ENCODE measurements at regions of chr3 and their contacts with region 1.

Region 1: DNA sequence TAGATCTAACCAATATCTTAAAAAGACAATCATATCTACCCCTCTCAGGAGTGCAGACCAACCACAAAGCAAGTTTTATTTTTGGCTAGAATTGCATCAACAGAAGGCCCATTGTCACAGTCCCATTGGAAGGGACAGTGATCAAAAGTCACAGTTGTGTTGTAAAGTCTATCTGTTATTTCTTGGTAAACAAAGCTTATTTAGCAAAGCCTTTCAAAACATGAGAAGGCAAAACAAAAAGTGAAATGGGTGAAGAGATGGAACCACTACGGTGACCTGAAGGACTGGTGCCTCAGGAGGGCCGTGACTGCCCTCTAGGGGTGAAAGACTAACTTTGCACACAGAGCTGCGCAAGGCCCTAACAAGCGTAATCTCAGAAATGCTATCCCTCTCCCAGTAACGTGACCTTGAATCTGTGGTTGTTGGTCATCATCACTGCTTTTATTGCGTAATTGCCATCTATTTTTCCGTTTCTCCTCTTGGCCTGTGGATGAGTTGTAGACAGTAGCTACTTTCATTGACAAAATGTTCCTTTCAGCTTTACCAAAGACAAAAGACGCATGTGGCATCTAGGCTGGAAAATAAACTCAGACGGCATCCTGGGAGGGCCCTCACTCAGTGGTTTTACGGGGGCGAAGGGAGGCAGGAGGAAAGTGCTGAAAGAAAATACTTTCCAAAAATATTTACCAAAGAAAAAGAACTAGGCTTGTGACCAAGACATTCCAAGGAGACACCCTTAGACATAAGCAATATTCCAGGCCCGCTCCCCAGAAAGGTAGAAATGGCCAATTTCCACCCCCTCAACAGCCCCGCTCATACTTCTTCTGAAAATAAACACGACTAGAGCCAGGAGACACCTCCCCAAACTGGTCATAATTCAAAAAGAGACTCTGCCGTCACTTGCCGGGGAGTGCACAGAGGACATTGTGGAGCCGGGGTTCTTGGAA is 79.4 kb downstream of the FRMD4B start:
- DNase-seq: peak; percentile 66 to 75
- ATAC-seq: peak; percentile 98
- H3K4me3 ChIP-seq: no peak overlapping the region
- H3K27ac ChIP-seq: peak overlapping the region; percentile 49 to 65 (median 55)
- H3K4me1 ChIP-seq: peaks cover 0 to 3% of the 10 kb centered on the region in 2 donors
- H3K27me3 ChIP-seq: no peaks in the 10 kb centered on the region
- CTCF ChIP-seq: peak; percentile 84 to 94 (median 89)
- POLR2A ChIP-seq: no peak

Region 2: DNA sequence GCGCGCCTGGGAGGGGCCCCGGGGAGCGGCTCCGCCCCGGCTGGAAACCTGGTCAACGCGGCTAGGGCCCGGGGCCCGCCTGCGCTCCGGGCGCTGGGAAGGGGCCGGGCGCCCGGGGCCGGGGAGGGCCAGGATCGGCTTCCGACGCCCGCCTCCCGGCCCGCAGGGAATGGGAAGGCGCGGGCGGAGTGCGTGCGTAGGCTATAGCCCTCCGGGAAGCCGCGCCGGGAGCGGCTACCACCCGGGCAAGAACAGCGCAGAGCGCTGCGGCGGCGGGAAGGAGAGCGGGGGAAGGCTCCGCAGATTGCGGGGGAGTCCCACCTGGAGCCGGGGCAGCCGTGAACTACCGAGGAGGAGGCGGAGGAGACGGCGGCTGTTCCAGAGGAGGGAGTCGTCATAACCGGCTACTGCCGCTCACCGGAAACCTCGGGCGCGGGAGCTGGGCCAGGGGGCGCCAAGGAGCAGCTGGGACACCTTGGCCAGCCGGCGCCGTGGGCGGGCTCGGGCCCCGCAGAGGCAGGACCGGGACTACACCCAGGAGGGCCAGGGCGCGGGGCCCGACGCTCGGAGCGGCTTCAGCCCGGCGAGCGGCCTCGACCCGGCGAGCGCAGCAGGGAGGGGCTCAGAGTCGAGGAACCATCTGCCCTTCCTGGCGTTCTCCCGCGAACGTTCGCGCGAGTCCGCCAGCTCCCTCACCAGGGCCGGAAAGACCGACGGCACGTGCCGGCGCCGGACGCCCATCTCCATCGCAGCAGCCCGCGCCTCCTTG is 293.1 kb before region 1 on chr3 and contains the start of gene EOGT:
- in situ Hi-C with region 1: loop called in 3 of 4 experiments (anchors 10 to 25 kb)
- intact Hi-C with region 1: loop called (anchors 2 kb)
- DNase-seq: peak; percentile 78 to 91
- ATAC-seq: peak; percentile 89 to 91
- H3K4me3 ChIP-seq: peak within 1 kb of the TSS; percentile 73 to 88 (median 80)
- H3K27ac ChIP-seq: peak within 1 kb of the TSS; percentile 90 to 100 (median 98)
- H3K4me1 ChIP-seq: peaks cover 40% of the 10 kb centered on the region in 2 donors
- H3K27me3 ChIP-seq: no peaks in the 10 kb centered on the region
- CTCF ChIP-seq: peak; percentile 48 to 63 (median 62)
- POLR2A ChIP-seq: peak; percentile 46 to 74
- total RNA-seq, gene EOGT: 13.3 to 25.2 (median 20.1) TPM

Region 3: GRCh38 chr3:69051756-69052471 is 254.6 kb before region 1 on chr3 and contains the start of gene TMF1:
- in situ Hi-C with region 1: loop called in 1 of 4 experiments (anchors 25 kb)
- intact Hi-C with region 1: loop called (anchors 1 kb)
- DNase-seq: peak; percentile 97
- ATAC-seq: peak; percentile 99
- H3K4me3 ChIP-seq: peak within 1 kb of the TSS; percentile 81 to 97 (median 85)
- H3K27ac ChIP-seq: peak within 1 kb of the TSS; percentile 90 to 96 (median 94)
- H3K4me1 ChIP-seq: peaks cover 10 to 16% of the 10 kb centered on the region in 2 donors
- H3K27me3 ChIP-seq: no peaks in the 10 kb centered on the region
- CTCF ChIP-seq: no peak
- POLR2A ChIP-seq: peak; percentile 71 to 76
- total RNA-seq, gene TMF1: 27.0 to 49.6 (median 33.5) TPM

Region 4: GRCh38 chr3:69161587-69162307 is 144.8 kb before region 1 on chr3:
- in situ Hi-C with region 1: loop called (anchors 5 to 10 kb)
- intact Hi-C with region 1: loop called (anchors 1 kb)
- DNase-seq: no peak
- ATAC-seq: peak in 1 of 2 donors; percentile 76
- H3K4me3 ChIP-seq: no peak overlapping the region
- H3K27ac ChIP-seq: no peak overlapping the region
- H3K4me1 ChIP-seq: no peaks in the 10 kb centered on the region
- H3K27me3 ChIP-seq: no peaks in the 10 kb centered on the region
- CTCF ChIP-seq: peak; percentile 79 to 95 (median 89)
- POLR2A ChIP-seq: no peak

Region 5: GRCh38 chr3:69294014-69294775 is 12.3 kb before region 1 on chr3:
- in situ Hi-C with region 1: no loop called
- intact Hi-C with region 1: no loop called
- DNase-seq: no peak
- ATAC-seq: no peak
- H3K4me3 ChIP-seq: no peak overlapping the region
- H3K27ac ChIP-seq: no peak overlapping the region
- H3K4me1 ChIP-seq: no peaks in the 10 kb centered on the region
- H3K27me3 ChIP-seq: no peaks in the 10 kb centered on the region
- CTCF ChIP-seq: no peak
- POLR2A ChIP-seq: no peak

Region 6: DNA sequence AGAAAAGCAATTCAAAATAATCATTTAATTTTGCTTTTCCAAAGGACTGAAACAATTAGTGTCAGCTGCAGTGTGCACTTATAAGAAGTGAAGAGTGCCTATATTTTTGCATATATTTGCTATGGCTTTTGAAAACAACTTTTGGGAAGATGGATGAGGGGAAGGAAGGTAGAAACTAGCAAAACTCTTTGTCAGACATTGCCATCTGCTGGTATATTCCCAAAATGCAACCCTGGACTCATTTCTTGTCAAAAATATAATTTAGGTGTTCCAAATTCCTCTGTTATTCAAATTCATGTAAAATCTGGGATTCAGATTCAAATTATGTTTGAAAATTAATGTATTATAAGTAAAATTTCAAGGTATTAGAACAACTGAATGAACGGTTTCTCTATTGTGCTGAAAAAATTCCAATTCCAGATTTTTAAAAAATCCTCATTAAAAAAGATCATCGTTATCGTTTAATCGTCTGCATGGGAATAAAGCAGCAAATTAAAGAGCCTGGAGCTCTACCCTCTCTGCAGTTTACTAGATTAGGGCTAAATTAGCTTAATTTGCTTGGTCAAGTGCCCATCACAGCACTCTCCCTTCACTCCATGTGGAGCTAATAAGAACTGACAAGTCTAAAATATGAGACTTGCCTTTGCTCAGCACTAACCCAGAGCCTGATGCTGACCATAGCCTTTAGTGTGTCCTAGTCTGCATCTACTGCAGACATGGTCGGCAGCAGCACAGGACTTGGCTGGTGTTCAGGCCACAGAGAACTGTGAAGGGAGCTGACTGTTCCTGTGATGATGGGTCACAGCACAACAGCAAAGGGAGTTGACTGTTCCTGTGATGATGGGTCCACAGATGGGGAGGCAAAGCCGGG is 364.8 kb after region 1 on chr3:
- in situ Hi-C with region 1: loop called in 1 of 4 experiments (anchors 5 kb)
- intact Hi-C with region 1: loop called (anchors 5 kb)
- DNase-seq: no peak
- ATAC-seq: no peak
- H3K4me3 ChIP-seq: no peak overlapping the region
- H3K27ac ChIP-seq: no peak overlapping the region
- H3K4me1 ChIP-seq: no peaks in the 10 kb centered on the region
- H3K27me3 ChIP-seq: peaks cover 0 to 2% (median 0%) of the 10 kb centered on the region in 3 donors
- CTCF ChIP-seq: peak; percentile 47 to 74 (median 61)
- POLR2A ChIP-seq: no peak

Measured in gastrocnemius medialis (tissue), 4 donors.